Endothelial cell of umbilical vein (primary cell): ENCODE measurements at regions of chr17 and their contacts with region 1.

Region 1: DNA sequence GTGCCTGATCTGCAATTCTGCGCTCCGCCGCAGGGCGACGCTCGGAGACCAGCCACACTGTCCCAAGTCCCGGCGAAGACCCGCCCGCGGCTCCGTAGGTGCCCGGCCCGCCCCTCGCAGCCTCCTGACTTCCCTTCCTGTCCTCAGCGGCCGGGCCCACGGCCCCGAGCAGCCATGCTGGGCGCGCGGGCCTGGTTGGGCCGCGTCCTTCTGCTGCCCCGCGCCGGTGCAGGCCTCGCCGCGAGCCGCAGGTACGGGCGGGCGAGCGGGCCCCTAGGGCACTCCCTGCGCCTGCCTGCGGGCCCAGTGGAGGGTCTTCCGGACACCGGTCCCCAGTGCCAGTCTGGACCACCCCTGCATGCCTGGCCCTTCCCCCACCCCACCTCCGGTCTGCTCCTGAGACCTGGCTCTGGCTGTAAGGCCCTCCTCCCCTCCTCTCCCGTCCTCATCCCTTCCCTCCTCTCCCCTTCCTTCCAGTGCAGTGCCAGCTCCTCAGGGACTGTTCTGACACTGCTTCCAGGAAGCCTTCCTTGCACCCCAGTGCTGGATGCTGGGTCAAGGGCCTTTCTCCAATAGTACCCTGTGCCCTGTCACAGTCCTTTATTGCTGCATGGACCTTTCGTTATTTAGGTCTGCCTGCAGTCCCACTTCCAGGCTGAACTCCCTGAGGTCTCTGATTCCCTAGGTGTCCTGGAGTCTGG is at the start of gene SPATA20:
- DNase-seq: peak; percentile 84
- H3K4me3 ChIP-seq: peak within 1 kb of the TSS; percentile 27 to 58 (median 46)
- H3K27ac ChIP-seq: peak within 1 kb of the TSS; percentile 47
- H3K4me1 ChIP-seq: peaks cover 12% of the 10 kb centered on the region
- H3K27me3 ChIP-seq: no peaks in the 10 kb centered on the region
- CTCF ChIP-seq: peak; percentile 95 to 99
- POLR2A ChIP-seq: peak; percentile 92
- total RNA-seq, gene SPATA20: 31.4 and 42.3 TPM in 2 replicates

Region 2: DNA sequence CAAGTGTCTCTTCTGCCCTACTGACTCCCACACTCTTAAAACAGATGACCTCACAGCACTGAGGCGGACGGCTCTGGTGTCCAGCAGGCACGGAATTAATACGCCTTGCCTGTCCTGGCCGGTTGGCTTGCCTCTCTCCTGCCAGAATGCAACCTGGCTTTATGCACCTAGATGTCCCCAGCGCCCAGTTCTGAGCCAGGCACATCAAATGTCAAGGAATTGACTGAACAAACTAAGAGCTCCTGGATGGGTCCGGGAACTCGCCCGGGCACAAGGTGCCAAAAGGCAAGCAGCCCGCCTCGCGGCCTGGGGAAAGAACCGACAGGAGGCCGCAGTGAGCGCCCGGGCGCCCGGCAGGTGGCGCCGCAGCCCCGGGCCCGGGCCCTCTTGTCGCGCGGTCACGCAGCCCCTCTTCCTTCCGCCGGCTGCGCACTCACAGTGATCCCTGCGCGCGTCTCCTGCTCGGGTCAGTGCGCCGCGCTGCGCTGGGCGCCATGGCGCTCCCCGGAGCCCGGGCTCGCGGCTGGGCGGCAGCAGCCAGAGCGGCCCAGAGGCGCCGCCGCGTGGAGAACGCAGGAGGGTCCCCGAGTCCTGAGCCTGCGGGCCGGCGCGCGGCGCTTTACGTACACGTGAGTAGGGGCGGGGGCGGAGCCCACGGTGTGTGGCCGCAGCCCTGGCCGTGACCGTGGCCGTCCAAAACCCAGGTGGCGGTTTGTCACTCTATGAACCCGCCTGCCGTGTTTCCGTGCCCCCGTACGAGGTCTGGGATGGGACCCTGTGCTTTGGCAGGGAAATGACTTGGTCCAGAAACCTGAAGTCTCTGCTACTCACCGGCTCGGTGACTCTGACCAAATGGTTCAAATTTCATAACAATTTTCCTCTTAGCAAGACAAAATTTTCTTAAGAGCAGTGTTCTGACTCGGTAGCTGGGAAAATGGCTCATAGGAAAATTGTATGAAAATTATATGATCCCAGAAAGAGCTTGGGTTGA is 68.5 kb before region 1 on chr17 and contains the start of gene RSAD1:
- CTCF ChIA-PET with region 1: interaction called, 12 read pairs
- POLR2A ChIA-PET with region 1: no interaction called
- dilution Hi-C with region 1: no loop called
- intact Hi-C with region 1: loop called (anchors 1 kb)
- DNase-seq: peak; percentile 88
- H3K4me3 ChIP-seq: peak within 1 kb of the TSS; percentile 58 to 85 (median 79)
- H3K27ac ChIP-seq: peak within 1 kb of the TSS; percentile 39
- H3K4me1 ChIP-seq: peaks cover 20% of the 10 kb centered on the region
- H3K27me3 ChIP-seq: peaks cover 7 to 17% of the 10 kb centered on the region in 2 experiments
- CTCF ChIP-seq: peak; percentile 77 to 88
- POLR2A ChIP-seq: peak; percentile 94
- total RNA-seq, gene RSAD1: 33.1 and 35.5 TPM in 2 replicates

Region 3: DNA sequence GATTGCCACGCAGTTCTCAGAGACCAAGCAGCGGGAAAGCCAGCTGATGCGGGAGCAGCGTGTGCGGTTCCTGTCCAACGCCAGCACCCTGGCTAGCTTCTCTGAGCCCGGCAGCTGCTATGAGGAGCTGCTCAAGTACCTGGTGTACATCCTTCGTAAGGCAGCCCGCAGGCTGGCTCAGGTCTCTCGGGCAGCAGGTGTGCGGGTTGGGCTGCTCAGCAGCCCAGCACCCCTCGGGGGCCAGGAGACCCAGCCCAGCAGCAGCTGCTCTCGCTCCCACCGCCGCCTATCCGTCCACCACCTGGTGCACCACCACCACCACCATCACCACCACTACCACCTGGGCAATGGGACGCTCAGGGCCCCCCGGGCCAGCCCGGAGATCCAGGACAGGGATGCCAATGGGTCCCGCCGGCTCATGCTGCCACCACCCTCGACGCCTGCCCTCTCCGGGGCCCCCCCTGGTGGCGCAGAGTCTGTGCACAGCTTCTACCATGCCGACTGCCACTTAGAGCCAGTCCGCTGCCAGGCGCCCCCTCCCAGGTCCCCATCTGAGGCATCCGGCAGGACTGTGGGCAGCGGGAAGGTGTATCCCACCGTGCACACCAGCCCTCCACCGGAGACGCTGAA is 28.5 kb after region 1 on chr17:
- CTCF ChIA-PET with region 1: interaction called, 10 read pairs
- POLR2A ChIA-PET with region 1: no interaction called
- dilution Hi-C with region 1: no loop called
- intact Hi-C with region 1: no loop called
- DNase-seq: no peak
- H3K4me3 ChIP-seq: no peak overlapping the region
- H3K27ac ChIP-seq: no peak overlapping the region
- H3K4me1 ChIP-seq: no peaks in the 10 kb centered on the region
- H3K27me3 ChIP-seq: peaks cover 0 to 5% of the 10 kb centered on the region in 2 experiments
- CTCF ChIP-seq: peak in 1 of 2 donors; percentile 2
- POLR2A ChIP-seq: no peak

Region 4: GRCh38 chr17:50618941-50619888 is 72.0 kb after region 1 on chr17:
- CTCF ChIA-PET with region 1: interaction called, 398 read pairs
- POLR2A ChIA-PET with region 1: no interaction called
- dilution Hi-C with region 1: no loop called
- intact Hi-C with region 1: no loop called
- DNase-seq: no peak
- H3K4me3 ChIP-seq: no peak overlapping the region
- H3K27ac ChIP-seq: no peak overlapping the region
- H3K4me1 ChIP-seq: peaks cover 6% of the 10 kb centered on the region
- H3K27me3 ChIP-seq: no peaks in the 10 kb centered on the region
- CTCF ChIP-seq: no peak
- POLR2A ChIP-seq: no peak

Region 5: DNA sequence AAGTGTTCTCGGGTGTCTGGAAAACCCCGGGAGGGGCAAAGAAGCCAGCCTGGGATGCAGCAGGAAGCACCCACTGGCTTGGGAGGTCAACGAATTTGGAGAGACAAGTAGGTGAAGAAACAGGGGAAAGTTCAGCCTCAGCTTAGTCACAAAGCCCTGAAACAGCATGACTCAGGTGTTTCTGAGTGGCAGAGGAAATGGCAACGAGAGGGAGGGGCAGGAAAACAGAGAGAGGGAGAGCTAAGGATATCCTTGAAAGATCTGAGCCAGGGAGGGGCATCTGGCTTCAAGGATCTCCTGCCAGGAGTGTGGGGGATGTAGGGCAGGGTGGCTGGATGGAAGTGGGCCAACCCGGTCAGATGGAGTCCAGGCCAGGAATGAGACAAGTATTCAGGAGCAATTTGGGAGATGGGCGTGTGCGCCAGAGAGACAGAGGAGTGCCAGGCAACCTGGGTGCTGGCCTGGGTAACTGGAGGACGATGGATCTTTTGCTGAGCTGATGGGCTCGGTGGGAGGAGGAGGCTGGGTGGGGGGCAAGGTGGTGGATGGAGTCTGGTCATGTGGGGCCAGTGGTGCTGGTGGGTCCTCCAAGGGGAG is 114.7 kb after region 1 on chr17:
- CTCF ChIA-PET with region 1: interaction called, 12 read pairs
- POLR2A ChIA-PET with region 1: no interaction called
- dilution Hi-C with region 1: no loop called
- intact Hi-C with region 1: no loop called
- DNase-seq: peak; percentile 86
- H3K4me3 ChIP-seq: no peak overlapping the region
- H3K27ac ChIP-seq: peak overlapping the region; percentile 90
- H3K4me1 ChIP-seq: peaks cover 31% of the 10 kb centered on the region
- H3K27me3 ChIP-seq: no peaks in the 10 kb centered on the region
- CTCF ChIP-seq: no peak
- POLR2A ChIP-seq: no peak

Region 6: GRCh38 chr17:50707289-50708049 is 160.3 kb after region 1 on chr17 and contains the start of gene ANKRD40:
- CTCF ChIA-PET with region 1: interaction called, 30 read pairs
- POLR2A ChIA-PET with region 1: no interaction called
- dilution Hi-C with region 1: no loop called
- intact Hi-C with region 1: no loop called
- DNase-seq: peak; percentile 93
- H3K4me3 ChIP-seq: peak within 1 kb of the TSS; percentile 37 to 93 (median 88)
- H3K27ac ChIP-seq: peak within 1 kb of the TSS; percentile 88
- H3K4me1 ChIP-seq: peaks cover 17% of the 10 kb centered on the region
- H3K27me3 ChIP-seq: peaks cover 2 to 4% of the 10 kb centered on the region in 2 experiments
- CTCF ChIP-seq: no peak
- POLR2A ChIP-seq: peak; percentile 78
- total RNA-seq, gene ANKRD40: 55.0 and 56.0 TPM in 2 replicates

Region 7: DNA sequence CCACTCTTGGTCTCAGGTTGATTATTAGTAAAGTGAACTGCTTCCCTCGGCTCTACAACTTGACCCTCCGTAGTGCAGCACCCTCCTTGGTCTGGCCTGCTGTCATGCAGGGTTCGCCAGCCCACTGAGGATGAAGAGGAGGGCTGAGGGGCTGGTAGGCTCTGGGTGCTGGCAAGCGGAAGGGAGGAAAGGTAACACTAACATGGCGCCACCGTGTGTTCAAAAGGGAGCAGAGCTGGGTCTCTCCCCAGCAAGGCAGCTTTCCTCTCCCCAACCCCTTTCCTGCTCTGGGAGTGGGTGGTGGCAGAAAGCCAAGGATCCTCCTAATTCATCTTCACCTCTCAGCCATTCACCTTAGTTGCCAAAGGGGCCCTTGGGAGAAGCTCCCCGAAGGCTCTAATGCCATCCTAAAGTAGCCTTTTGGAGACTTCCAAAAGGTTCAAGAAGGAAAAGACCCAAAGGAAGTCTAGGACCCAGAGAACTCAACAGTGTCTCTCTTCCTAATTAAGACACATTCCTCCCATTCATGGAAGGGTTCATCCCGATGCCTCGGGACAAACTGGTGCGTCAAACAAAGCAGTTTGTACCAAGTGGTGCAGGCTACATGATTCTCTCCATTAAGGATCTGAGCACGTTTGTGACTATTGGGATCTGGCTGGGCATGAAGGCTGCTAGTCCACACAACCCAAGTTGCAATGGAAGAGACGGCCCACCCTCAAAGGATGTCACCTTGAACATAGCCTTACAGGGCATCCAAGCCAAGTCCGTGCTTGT is 409.8 kb after region 1 on chr17:
- CTCF ChIA-PET with region 1: no interaction called
- POLR2A ChIA-PET with region 1: no interaction called
- dilution Hi-C with region 1: no loop called
- intact Hi-C with region 1: loop called (anchors 5 kb)
- DNase-seq: peak; percentile 44
- H3K4me3 ChIP-seq: no peak overlapping the region
- H3K27ac ChIP-seq: no peak overlapping the region
- H3K4me1 ChIP-seq: peaks cover 7% of the 10 kb centered on the region
- H3K27me3 ChIP-seq: no peaks in the 10 kb centered on the region
- CTCF ChIP-seq: peak; percentile 76 to 87
- POLR2A ChIP-seq: no peak